Activated CD4-positive, alpha-beta T cell treated with anti-CD3 and anti-CD28 coated beads for 36 hours (primary cell): ENCODE measurements at regions of chr16 and their contacts with region 1.

Region 1: DNA sequence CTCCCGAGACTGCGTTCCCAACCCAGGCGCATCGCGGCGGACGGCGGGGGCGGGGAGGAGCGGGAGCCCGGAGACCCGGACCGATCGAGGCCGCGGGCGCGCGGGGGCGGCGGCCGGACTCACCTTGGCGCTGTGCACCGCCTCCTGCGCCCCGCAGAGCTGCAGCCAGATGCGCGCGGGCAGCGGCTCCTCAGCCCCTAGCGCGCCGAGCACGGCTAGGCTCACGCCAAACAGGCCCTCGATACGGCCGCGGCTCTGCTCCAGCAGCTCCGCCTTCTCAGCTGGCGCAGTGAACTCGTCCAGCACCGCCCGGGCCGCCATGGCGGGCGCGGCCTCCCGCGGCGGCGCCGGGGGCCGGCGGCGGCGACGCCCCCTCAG is 339 bp downstream of the N4BP1 start:
- DNase-seq: no peak
- ATAC-seq: peak; percentile 24
- H3K4me3 Mint-ChIP-seq: no peak overlapping the region
- H3K27ac Mint-ChIP-seq: no peak overlapping the region
- H3K4me1 Mint-ChIP-seq: peaks cover 39% of the 10 kb centered on the region
- H3K27me3 Mint-ChIP-seq: no peaks in the 10 kb centered on the region

Region 2: DNA sequence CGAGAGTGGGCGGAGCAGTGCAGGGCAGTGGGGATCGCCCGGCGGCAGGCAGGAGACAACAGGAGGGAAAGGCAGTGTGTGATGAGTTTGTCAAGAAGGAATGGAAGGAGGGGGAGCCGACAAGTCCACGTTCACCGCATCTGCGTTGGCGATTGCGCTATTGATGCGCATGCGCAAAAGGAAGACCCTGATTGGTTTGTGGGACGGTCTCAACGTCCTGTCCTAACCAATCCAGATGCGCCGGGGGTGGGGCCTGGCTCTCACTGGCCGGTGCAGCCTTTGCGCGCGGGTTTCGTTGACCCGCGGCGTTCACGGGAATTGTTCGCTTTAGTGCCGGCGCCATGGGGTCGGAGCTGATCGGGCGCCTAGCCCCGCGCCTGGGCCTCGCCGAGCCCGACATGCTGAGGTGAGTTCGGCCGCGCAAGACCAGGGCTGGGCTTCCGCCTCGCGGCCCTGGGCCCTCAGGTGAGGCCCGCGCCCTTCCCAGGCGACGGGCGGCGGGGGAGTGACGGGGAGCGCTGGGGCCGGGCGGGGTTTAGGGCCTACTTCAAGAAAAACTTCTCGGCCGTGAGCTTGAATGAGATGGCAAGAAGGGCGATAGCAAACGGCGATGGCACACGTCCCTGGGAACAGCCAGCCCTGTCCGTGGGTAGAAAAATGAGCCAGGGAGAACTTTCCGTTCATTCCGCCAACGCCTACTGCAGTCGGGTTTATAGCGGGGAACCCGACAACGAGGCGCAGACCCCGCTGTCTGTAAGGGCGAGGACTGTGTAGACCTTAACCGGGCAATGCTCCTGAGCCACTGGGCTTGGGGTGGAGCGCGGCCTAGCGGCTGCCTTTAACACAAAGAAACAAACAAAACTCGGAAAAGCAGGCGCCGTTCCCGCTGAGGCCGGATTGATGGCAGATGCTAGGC is 1920.0 kb before region 1 on chr16 and contains the start of gene ORC6:
- CTCF ChIA-PET with region 1: no interaction called
- POLR2A ChIA-PET with region 1: no interaction called
- intact Hi-C with region 1: loop called in 1 of 2 experiments (anchors 10 kb)
- DNase-seq: peak; percentile 99
- ATAC-seq: peak; percentile 83
- H3K4me3 Mint-ChIP-seq: no peak within 1 kb of the TSS
- H3K27ac Mint-ChIP-seq: no peak within 1 kb of the TSS
- H3K4me1 Mint-ChIP-seq: peaks cover 43% of the 10 kb centered on the region
- H3K27me3 Mint-ChIP-seq: no peaks in the 10 kb centered on the region
- total RNA-seq, gene ORC6: 30.3 to 43.4 TPM

Region 3: DNA sequence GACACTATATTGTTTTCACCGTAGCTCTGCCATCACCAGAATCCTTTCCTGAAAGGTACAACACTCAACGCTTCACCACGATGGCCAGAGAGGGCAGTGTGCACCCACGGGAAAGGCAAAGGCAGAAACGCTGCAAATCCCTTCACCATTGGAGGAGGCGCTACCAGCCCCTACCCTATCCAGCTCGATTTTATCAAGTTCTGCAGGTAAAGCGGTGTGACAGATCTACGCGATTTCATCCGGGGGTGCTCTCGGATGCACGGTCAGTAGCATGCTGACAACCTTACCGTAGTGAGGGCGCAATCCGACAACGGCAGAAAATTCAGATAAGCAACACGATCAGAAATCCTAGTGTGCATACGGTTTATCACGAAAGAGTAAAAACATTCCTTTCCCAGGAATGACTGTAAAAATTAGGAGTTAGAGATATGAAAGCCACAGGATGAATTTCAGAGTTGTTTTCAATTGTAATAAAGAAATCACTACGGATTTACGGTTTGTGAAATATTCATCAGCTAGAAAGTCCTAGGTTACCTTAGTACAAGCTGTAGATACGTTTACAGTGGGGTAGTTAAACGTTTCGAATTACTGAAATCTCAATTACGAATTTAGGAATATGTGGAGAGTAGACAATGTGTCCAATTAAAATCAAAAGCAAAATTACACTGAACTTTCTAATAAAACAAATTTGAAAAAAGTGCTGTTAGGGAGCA is 1467.7 kb before region 1 on chr16:
- CTCF ChIA-PET with region 1: no interaction called
- POLR2A ChIA-PET with region 1: no interaction called
- intact Hi-C with region 1: loop called in 1 of 2 experiments (anchors 5 kb)
- DNase-seq: peak; percentile 91
- ATAC-seq: peak; percentile 79
- H3K4me3 Mint-ChIP-seq: peak overlapping the region; percentile 75
- H3K27ac Mint-ChIP-seq: peak overlapping the region; percentile 58
- H3K4me1 Mint-ChIP-seq: peaks cover 35% of the 10 kb centered on the region
- H3K27me3 Mint-ChIP-seq: peaks cover 21% of the 10 kb centered on the region

Region 4: DNA sequence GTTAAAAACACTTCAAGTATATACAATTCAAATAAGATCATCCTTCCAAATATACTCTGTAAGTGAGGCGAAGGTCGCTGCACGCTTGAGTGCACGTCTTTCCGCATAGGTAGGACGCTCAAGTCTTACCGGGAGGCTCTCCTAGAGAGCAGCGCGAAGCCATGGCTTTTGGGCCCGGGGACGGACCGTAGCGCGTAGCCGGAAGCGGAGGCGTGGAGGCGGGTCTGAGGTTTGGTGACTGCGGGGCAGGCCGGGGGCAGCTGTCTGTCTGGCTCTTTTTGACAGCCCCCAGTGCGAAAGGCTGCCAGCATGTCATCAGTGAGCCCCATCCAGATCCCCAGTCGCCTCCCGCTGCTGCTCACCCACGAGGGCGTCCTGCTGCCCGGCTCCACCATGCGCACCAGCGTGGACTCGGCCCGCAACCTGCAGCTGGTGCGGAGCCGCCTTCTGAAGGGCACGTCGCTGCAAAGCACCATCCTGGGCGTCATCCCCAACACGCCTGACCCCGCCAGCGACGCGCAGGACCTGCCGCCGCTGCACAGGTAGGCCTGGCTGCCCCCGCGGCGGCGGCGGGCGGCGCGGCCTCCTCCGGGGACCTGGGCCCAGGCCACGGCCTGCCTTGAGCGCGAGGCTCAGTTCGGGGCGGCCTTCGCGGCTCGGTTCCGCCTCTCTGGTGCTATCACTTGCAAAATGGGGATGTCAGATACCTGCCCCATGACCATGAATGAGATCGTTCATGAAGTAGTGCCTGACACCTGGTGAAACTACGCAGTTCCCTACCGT is 365.4 kb before region 1 on chr16 and contains the start of gene LONP2:
- CTCF ChIA-PET with region 1: no interaction called
- POLR2A ChIA-PET with region 1: no interaction called
- intact Hi-C with region 1: loop called in 1 of 2 experiments (anchors 1 kb)
- DNase-seq: peak; percentile 95
- ATAC-seq: peak; percentile 94
- H3K4me3 Mint-ChIP-seq: peak within 1 kb of the TSS; percentile 91
- H3K27ac Mint-ChIP-seq: peak within 1 kb of the TSS; percentile 88
- H3K4me1 Mint-ChIP-seq: peaks cover 36% of the 10 kb centered on the region
- H3K27me3 Mint-ChIP-seq: no peaks in the 10 kb centered on the region
- total RNA-seq, gene LONP2: 60.3 to 63.2 TPM

Region 5: DNA sequence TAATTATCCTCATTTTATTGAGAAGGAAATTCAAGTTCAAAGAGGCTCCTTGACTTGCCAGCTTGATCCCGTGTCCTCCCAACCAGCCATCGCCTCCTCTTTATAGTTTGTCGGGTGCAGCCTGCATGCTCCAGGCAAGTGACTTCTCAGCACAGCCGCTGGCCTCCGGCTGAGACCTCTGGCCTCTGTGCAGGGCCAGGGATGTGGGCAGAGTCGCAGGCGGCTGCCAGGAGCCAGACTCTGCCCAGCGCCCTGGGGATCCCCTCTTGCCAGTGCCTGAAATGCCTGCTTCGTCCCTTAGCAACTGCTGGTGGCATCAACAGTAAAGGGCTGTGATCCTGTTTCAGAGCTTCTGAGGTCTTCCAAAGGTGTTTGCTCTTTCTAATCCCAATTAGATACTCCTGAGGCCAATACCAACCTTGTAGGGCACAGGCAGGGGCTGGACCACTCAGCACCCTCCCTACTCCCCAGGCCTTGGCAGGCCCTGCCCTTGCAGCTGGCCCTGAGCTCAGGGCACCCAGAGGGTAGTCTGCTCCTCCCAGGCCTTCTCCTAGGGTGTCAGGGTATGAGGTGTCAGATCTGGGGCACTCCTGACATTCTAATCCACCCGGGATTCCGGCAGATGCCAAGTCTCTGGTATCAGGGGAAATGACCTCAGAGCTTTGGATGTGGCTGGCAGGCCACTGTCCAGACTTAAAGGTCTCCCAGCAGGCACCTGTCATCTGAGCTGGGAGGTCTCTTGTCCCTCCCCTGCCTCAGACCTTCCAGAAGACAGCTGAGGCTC is 156.5 kb before region 1 on chr16:
- CTCF ChIA-PET with region 1: no interaction called
- POLR2A ChIA-PET with region 1: no interaction called
- intact Hi-C with region 1: loop called (anchors 1 to 5 kb)
- DNase-seq: no peak
- ATAC-seq: no peak
- H3K4me3 Mint-ChIP-seq: no peak overlapping the region
- H3K27ac Mint-ChIP-seq: no peak overlapping the region
- H3K4me1 Mint-ChIP-seq: peaks cover 2% of the 10 kb centered on the region
- H3K27me3 Mint-ChIP-seq: peaks cover 16% of the 10 kb centered on the region

Region 6: GRCh38 chr16:48576927-48577326 is 32.7 kb before region 1 on chr16:
- CTCF ChIA-PET with region 1: interaction called, 3 read pairs
- POLR2A ChIA-PET with region 1: no interaction called
- intact Hi-C with region 1: loop called (anchors 1 to 5 kb)
- DNase-seq: peak; percentile 50
- ATAC-seq: peak; percentile 97
- H3K4me3 Mint-ChIP-seq: no peak overlapping the region
- H3K27ac Mint-ChIP-seq: peak overlapping the region; percentile 78
- H3K4me1 Mint-ChIP-seq: peaks cover 58% of the 10 kb centered on the region
- H3K27me3 Mint-ChIP-seq: no peaks in the 10 kb centered on the region

Region 7: GRCh38 chr16:48632137-48632774 is 22.6 kb after region 1 on chr16:
- CTCF ChIA-PET with region 1: interaction called, 11 read pairs
- POLR2A ChIA-PET with region 1: no interaction called
- intact Hi-C with region 1: no loop called
- DNase-seq: no peak
- ATAC-seq: no peak
- H3K4me3 Mint-ChIP-seq: no peak overlapping the region
- H3K27ac Mint-ChIP-seq: no peak overlapping the region
- H3K4me1 Mint-ChIP-seq: peaks cover 8% of the 10 kb centered on the region
- H3K27me3 Mint-ChIP-seq: peaks cover 2% of the 10 kb centered on the region